AG04450 (cell line): ENCODE measurements at regions of chrX and their contacts with region 1.

Region 1: GRCh38 chrX:22882543-22882942 is 117.2 kb upstream of the DDX53 start:
- DNase-seq: no peak
- H3K4me3 ChIP-seq: no peak overlapping the region
- H3K27ac ChIP-seq: no peak overlapping the region
- H3K27me3 ChIP-seq: no peaks in the 10 kb centered on the region
- CTCF ChIP-seq: no peak

Region 2: DNA sequence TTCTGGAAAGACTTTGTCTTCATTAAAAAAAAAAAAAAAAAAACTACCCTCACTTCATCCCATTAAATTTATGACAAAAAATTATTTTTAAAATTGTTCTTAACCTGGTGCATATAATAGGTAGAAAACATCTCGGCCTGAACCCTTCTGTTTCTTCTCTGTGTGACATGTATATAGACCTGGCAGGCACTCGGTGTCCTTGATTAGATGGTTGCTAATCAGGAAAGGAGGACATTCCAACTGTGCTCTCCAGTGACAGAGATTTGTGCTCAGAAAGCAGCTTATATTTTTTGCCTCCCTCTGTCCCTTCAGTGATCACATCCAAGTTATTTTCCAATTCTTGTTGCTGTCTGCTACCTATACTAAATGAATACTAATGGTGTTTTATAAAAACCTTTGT is 254.3 kb before region 1 on chrX:
- CTCF ChIA-PET with region 1: interaction called, 11 read pairs
- POLR2A ChIA-PET with region 1: no interaction called
- DNase-seq: no peak
- H3K4me3 ChIP-seq: no peak overlapping the region
- H3K27ac ChIP-seq: no peak overlapping the region
- H3K27me3 ChIP-seq: no peaks in the 10 kb centered on the region
- CTCF ChIP-seq: no peak

Region 3: GRCh38 chrX:23194903-23195554 is 312.5 kb after region 1 on chrX:
- CTCF ChIA-PET with region 1: no interaction called
- POLR2A ChIA-PET with region 1: no interaction called
- DNase-seq: no peak
- H3K4me3 ChIP-seq: no peak overlapping the region
- H3K27ac ChIP-seq: no peak overlapping the region
- H3K27me3 ChIP-seq: no peaks in the 10 kb centered on the region
- CTCF ChIP-seq: no peak

Region 4: GRCh38 chrX:23228950-23229448 is 346.5 kb after region 1 on chrX:
- CTCF ChIA-PET with region 1: no interaction called
- POLR2A ChIA-PET with region 1: no interaction called
- DNase-seq: no peak
- H3K4me3 ChIP-seq: no peak overlapping the region
- H3K27ac ChIP-seq: no peak overlapping the region
- H3K27me3 ChIP-seq: no peaks in the 10 kb centered on the region
- CTCF ChIP-seq: no peak